Activated CD4-positive, alpha-beta memory T cell treated with anti-CD3 and anti-CD28 coated beads for 36 hours (primary cell): ENCODE measurements at regions of chr3 and their contacts with region 1.

Region 1: DNA sequence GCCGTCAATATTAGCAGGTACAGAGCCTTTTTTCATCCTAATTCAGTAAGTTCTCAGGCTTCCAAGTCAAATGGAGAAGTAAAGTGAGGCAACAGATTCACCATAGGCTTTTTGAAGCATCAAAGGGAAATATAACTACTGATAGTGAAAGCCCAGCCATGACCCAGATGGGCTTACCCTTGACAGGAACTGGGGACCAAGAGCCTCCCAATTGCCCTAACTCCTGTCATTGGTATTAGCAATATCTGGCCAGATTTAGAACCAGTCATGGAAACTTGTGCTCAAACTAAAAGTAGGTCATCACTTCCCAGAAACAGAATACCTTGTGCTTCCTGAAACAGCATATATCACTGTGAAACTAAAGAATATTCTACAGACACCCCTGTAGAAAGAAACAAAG is 33.0 kb downstream of the NME9 start:
- DNase-seq: peak; percentile 67
- H3K4me3 Mint-ChIP-seq: peak overlapping the region; percentile 31
- H3K27ac Mint-ChIP-seq: peak overlapping the region; percentile 83
- H3K4me1 Mint-ChIP-seq: peaks cover 33% of the 10 kb centered on the region
- H3K27me3 Mint-ChIP-seq: no peaks in the 10 kb centered on the region

Region 2: DNA sequence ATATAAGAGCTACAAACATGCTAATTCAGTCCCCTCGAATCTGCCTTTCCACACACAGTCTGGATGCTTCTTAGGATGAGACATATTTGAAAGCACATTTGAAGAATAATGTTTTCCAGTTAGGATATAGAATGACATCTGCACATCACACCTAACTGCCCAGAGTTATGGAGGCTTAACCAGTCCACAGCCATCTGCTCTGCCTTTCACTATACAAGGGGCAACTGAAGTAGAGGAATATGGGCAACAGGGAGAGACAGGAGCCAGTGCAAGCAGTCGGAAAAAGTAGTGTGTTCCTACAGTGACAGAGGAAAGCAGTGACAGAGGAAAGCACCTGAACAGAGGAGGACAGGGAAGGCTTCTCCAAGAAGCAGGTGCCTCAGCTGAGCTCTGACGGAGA is 365.7 kb before region 1 on chr3:
- CTCF ChIA-PET with region 1: no interaction called
- POLR2A ChIA-PET with region 1: no interaction called
- intact Hi-C with region 1: no loop called
- DNase-seq: no peak
- H3K4me3 Mint-ChIP-seq: no peak overlapping the region
- H3K27ac Mint-ChIP-seq: no peak overlapping the region
- H3K4me1 Mint-ChIP-seq: no peaks in the 10 kb centered on the region
- H3K27me3 Mint-ChIP-seq: peaks cover 7% of the 10 kb centered on the region

Region 3: DNA sequence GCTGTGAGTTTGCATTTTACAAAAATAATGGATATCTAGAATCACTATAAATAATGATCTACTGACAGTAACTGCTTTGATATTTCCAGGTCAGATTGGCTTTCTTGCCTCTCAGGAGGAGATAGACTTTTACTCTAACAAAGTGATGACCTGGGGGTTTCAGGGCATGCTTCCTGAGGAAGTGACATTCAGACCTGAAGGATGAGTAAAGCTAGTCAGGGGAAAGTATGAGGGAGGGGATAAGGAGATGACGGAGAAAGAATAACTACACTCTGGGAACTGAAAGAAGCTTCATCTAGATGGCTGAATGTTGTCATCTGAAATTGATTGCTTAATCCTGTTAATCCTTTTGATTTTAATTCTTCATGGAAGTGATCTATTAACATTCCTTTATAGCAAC is 77.4 kb before region 1 on chr3:
- CTCF ChIA-PET with region 1: no interaction called
- POLR2A ChIA-PET with region 1: no interaction called
- intact Hi-C with region 1: loop called (anchors 2 kb)
- DNase-seq: peak; percentile 21
- H3K4me3 Mint-ChIP-seq: no peak overlapping the region
- H3K27ac Mint-ChIP-seq: peak overlapping the region; percentile 25
- H3K4me1 Mint-ChIP-seq: peaks cover 31% of the 10 kb centered on the region
- H3K27me3 Mint-ChIP-seq: no peaks in the 10 kb centered on the region

Region 4: GRCh38 chr3:138234401-138235179 is 62.0 kb before region 1 on chr3:
- CTCF ChIA-PET with region 1: no interaction called
- POLR2A ChIA-PET with region 1: no interaction called
- intact Hi-C with region 1: loop called (anchors 2 kb)
- DNase-seq: no peak
- H3K4me3 Mint-ChIP-seq: no peak overlapping the region
- H3K27ac Mint-ChIP-seq: peak overlapping the region; percentile 42
- H3K4me1 Mint-ChIP-seq: peaks cover 21% of the 10 kb centered on the region
- H3K27me3 Mint-ChIP-seq: no peaks in the 10 kb centered on the region